Activated T-helper 1 cell treated with anti-CD3 and anti-CD28 coated beads, Interleukin-12 subunit alpha, Interleukin-12 subunit beta, Interleukin-2, Interleukin-4 antibody, amounts not matched to agents 30 ng/mL and 10 ng/mL and 1 ng/mL, durations not matched to agents 14 hours and 24 hours and 36 hours (primary cell): ENCODE measurements at regions of chr13 and their contacts with region 1.

Region 1: GRCh38 chr13:20945952-20946383 is 43.4 kb upstream of the XPO4 start:
- DNase-seq: no peak
- H3K4me3 Mint-ChIP-seq: peak overlapping the region; percentile 34
- H3K27ac Mint-ChIP-seq: no peak overlapping the region
- H3K4me1 Mint-ChIP-seq: peaks cover 6% of the 10 kb centered on the region
- H3K27me3 Mint-ChIP-seq: peaks cover 36% of the 10 kb centered on the region

Region 2: DNA sequence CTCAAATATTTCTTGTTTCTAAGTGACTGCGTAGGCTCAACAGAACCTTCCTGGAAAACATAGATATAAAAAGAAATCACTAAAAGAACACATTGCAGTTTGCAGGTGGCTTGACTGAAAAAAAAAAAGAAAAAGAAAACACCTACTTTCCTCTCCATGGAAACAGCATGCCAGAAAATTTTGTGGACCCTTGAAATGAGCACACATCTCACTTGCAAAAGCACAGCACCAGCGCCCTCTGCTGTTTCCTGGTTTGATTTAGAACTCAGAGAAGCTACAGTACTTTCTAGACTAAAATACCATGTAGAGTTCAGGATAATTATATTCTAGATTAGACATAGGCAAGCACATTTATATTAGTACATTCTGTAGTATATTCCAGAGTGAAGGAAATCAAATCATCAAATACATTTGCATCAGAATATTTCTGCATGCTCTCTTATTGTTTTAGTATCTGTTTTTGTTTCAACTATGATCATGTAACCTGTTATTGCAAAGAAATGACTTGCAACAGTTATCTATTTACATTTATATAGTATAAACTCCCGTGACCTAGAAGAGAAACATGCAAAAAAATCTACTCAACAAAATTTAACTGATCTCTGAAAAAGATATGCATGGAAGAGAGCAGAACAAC is 21.1 kb before region 1 on chr13:
- intact Hi-C with region 1: no loop called
- DNase-seq: peak; percentile 48
- H3K4me3 Mint-ChIP-seq: no peak overlapping the region
- H3K27ac Mint-ChIP-seq: no peak overlapping the region
- H3K4me1 Mint-ChIP-seq: no peaks in the 10 kb centered on the region
- H3K27me3 Mint-ChIP-seq: peaks cover 2% of the 10 kb centered on the region

Region 3: DNA sequence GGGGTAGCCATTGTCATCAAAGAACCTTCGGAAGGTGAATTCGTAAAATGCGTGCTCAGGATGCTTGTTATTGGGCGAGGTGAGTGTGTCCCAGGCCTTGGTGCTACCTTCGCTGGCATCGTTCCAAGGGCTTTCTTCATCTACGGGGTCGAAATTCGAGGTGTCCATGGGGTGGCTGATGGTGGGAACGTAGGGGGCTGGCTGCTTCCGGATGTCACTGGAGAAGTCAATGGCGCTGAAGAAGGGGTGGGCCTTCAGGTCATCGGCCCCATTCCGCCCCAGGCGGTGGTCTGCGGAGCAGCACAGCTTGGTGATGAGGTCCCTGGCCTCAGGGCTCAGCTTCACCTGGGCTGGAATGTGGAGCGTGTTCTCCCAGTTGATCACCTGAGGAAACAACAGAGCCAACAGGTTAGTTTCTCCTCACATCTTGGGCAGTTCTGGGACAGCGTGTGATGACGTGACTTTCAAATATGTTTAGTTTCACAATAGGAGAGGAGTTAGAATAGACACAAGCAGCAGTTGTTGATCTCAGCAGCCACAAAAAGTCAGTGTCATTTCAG is 29.1 kb after region 1 on chr13:
- intact Hi-C with region 1: no loop called
- DNase-seq: no peak
- H3K4me3 Mint-ChIP-seq: no peak overlapping the region
- H3K27ac Mint-ChIP-seq: no peak overlapping the region
- H3K4me1 Mint-ChIP-seq: no peaks in the 10 kb centered on the region
- H3K27me3 Mint-ChIP-seq: no peaks in the 10 kb centered on the region

Region 4: GRCh38 chr13:21075011-21075898 is 129.3 kb after region 1 on chr13:
- intact Hi-C with region 1: loop called (anchors 10 kb)
- DNase-seq: peak; percentile 26
- H3K4me3 Mint-ChIP-seq: peak overlapping the region; percentile 68
- H3K27ac Mint-ChIP-seq: peak overlapping the region; percentile 56
- H3K4me1 Mint-ChIP-seq: peaks cover 14% of the 10 kb centered on the region
- H3K27me3 Mint-ChIP-seq: peaks cover 9% of the 10 kb centered on the region

Region 5: DNA sequence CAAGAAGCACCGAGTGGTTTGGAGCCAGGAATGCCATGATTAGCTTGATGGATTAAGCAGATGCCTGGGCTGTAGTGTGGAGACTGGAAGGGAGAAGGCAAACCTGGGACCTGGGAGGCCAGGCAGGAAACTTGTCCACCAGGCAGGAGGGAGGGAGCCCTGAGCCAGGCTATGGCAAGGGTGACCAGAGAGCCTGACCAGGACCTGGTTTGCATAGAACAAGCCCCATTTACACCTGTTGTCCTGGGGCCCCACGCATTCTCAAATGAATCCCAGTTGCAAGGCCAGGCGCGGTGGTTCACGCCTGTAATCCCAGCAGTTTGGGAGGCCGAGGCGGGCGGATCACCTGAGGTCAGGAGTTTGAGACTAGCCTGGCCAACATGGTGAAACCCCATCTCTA is 165.6 kb after region 1 on chr13:
- intact Hi-C with region 1: loop called (anchors 2 kb)
- DNase-seq: no peak
- H3K4me3 Mint-ChIP-seq: no peak overlapping the region
- H3K27ac Mint-ChIP-seq: no peak overlapping the region
- H3K4me1 Mint-ChIP-seq: no peaks in the 10 kb centered on the region
- H3K27me3 Mint-ChIP-seq: peaks cover 3% of the 10 kb centered on the region

Region 6: GRCh38 chr13:21134475-21134874 is 188.5 kb after region 1 on chr13:
- intact Hi-C with region 1: loop called (anchors 1 kb)
- DNase-seq: no peak
- H3K4me3 Mint-ChIP-seq: no peak overlapping the region
- H3K27ac Mint-ChIP-seq: no peak overlapping the region
- H3K4me1 Mint-ChIP-seq: peaks cover 2% of the 10 kb centered on the region
- H3K27me3 Mint-ChIP-seq: peaks cover 15% of the 10 kb centered on the region

Region 7: GRCh38 chr13:21371011-21371410 is 425.0 kb after region 1 on chr13:
- intact Hi-C with region 1: no loop called
- DNase-seq: no peak
- H3K4me3 Mint-ChIP-seq: no peak overlapping the region
- H3K27ac Mint-ChIP-seq: no peak overlapping the region
- H3K4me1 Mint-ChIP-seq: peaks cover under 1% of the 10 kb centered on the region
- H3K27me3 Mint-ChIP-seq: no peaks in the 10 kb centered on the region

Region 8: GRCh38 chr13:21476893-21477472 is 531.0 kb after region 1 on chr13:
- intact Hi-C with region 1: loop called (anchors 1 kb)
- DNase-seq: peak; percentile 73
- H3K4me3 Mint-ChIP-seq: peak overlapping the region; percentile 67
- H3K27ac Mint-ChIP-seq: no peak overlapping the region
- H3K4me1 Mint-ChIP-seq: peaks cover 16% of the 10 kb centered on the region
- H3K27me3 Mint-ChIP-seq: peaks cover 8% of the 10 kb centered on the region

Region 9: GRCh38 chr13:22793598-22794134 is 1847.7 kb after region 1 on chr13:
- intact Hi-C with region 1: loop called (anchors 10 kb)
- DNase-seq: no peak
- H3K4me3 Mint-ChIP-seq: no peak overlapping the region
- H3K27ac Mint-ChIP-seq: no peak overlapping the region
- H3K4me1 Mint-ChIP-seq: no peaks in the 10 kb centered on the region
- H3K27me3 Mint-ChIP-seq: no peaks in the 10 kb centered on the region